GM13977 (cell line): ENCODE measurements at regions of chr20 and their contacts with region 1.

Region 1: GRCh38 chr20:21808863-21809664 is 103.6 kb downstream of the PAX1 start:
- DNase-seq: peak; percentile 63
- CTCF ChIP-seq: peak; percentile 79

Region 2: DNA sequence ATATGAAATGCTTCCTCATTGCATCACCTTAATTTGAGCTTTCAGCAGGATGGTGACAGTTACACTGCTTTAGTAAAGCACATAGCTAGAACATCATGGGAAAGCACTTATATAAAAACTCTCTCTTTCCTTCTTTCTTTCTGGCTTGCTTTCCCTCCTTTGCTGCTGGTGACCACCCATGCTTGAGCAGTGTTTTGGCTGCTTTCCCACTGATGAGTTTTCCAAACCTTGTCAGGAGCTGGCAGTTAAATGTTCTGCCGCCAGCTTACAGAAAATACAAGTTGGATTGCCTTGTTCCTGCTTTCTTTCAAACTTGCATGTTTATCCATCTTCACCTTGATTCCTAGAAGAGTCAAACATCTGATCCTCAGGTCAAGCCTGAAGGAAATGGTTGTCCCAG is 451.4 kb after region 1 on chr20:
- in situ Hi-C with region 1: loop called (anchors 25 kb)
- DNase-seq: no peak
- CTCF ChIP-seq: no peak

Region 3: DNA sequence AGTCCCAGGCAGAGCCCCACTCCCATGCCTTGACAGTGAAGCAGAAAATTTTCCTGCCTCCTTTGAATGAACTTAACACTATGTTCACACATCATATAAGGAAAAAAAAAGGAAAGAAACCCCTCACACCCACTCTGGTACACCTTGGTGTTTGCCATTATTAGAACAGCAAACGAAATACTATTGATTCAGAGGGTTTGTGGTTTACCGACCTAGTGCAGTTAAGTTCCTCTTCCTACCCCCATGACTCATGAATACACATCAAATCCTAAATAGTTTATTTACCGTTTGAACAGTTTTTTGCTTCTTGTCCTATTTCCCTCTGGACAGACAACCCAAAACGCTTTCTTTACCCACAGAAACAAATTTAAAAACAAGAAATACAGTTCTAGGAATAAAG is 537.7 kb after region 1 on chr20:
- in situ Hi-C with region 1: no loop called
- DNase-seq: no peak
- CTCF ChIP-seq: no peak